BJ (cell line): ENCODE measurements at regions of chr3 and their contacts with region 1.

Region 1: DNA sequence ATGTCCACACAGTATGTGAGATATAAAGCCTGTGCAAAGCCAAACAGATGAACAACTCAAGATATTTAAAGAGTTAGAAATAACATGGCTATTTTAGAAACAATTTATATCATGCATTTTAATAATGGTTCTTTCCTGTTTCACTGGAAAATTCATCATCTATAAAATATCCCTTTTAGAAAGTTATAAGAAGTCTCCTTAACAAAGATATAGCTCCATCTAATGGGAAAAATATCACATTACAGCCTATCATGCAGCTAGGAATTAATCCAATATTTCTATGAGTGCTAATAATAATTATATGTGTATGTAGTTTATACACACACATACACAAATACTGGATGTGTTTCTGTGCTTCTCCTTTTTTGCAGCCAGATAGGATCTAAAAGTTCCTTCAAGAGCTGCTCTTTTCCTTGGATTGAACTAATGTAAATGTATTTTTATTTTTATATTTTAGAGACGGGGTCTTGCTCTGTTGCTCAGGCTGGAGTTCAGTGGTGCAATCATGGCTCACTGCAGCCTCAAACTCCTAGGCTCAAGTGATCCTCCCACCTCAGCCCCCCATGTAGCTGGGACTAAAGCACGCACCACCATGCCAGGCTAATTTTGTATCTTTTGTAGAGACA is 21.6 kb downstream of the RPL22L1 start:
- DNase-seq: no peak
- H3K4me3 ChIP-seq: no peak overlapping the region
- H3K27me3 ChIP-seq: no peaks in the 10 kb centered on the region
- CTCF ChIP-seq: peak; percentile 22; the same call in 1 of the 2 replicates

Region 2: GRCh38 chr3:170469151-170470062 is 379.0 kb before region 1 on chr3:
- CTCF ChIA-PET with region 1: no interaction called
- POLR2A ChIA-PET with region 1: interaction called, 15 read pairs
- DNase-seq: peak; percentile 91
- H3K4me3 ChIP-seq: no peak overlapping the region
- H3K27me3 ChIP-seq: no peaks in the 10 kb centered on the region
- CTCF ChIP-seq: no peak

Region 3: DNA sequence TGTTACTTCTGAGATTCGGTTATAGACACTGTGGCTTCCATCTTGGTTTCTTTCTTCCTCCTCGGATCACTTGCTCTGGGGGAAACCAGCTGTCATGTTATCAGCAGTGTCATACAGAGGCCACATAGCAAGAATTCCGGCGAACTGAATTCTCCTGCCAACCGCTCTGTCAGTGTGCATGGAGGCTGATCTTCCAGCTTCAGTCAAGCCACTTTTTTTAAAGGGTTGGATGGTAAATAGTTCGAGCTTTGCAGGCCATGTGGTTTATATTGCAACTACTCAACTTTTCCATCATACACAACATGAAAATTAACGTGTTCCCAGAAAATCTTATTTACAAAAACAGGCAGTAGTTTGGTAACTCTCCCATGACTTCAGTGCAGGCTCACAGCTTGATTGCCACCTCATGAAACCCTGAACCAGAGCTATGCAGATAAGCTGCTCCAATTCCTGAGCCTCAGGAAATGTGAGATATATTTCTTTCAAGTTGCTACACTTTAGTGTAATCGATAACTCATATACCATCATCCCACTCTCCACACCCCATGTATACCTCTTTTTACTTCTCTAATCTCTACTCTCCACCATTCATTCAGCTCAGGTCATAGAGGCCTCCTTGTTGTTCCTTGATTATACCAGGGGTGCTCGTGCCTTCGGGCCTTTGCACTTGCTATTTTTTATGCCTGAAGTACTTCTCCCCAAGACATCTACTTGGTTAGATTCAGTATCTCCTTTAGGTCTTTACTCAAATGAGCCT is 14.4 kb after region 1 on chr3:
- CTCF ChIA-PET with region 1: interaction called, 15 read pairs
- POLR2A ChIA-PET with region 1: no interaction called
- DNase-seq: no peak
- H3K4me3 ChIP-seq: no peak overlapping the region
- H3K27me3 ChIP-seq: no peaks in the 10 kb centered on the region
- CTCF ChIP-seq: no peak